ENCODE measurements at regions of chr2 and their contacts with region 1.

Region 1: GRCh38 chr2:43478411-43479086 is 117.3 kb downstream of the THADA start:
- DNase-seq: peak; percentile 43
- ATAC-seq: peak; percentile 64
- H3K4me3 ChIP-seq: no peak overlapping the region
- H3K27ac ChIP-seq: no peak overlapping the region
- H3K4me1 ChIP-seq: 0 out of 2 replicates have a peak, but pooled peaks cover 4% of the 10 kb centered on the region
- H3K27me3 ChIP-seq: no peaks in the 10 kb centered on the region
- CTCF ChIP-seq: no peak
- POLR2A ChIP-seq: no peak
- RAD21 ChIP-seq: no peak

Region 2: DNA sequence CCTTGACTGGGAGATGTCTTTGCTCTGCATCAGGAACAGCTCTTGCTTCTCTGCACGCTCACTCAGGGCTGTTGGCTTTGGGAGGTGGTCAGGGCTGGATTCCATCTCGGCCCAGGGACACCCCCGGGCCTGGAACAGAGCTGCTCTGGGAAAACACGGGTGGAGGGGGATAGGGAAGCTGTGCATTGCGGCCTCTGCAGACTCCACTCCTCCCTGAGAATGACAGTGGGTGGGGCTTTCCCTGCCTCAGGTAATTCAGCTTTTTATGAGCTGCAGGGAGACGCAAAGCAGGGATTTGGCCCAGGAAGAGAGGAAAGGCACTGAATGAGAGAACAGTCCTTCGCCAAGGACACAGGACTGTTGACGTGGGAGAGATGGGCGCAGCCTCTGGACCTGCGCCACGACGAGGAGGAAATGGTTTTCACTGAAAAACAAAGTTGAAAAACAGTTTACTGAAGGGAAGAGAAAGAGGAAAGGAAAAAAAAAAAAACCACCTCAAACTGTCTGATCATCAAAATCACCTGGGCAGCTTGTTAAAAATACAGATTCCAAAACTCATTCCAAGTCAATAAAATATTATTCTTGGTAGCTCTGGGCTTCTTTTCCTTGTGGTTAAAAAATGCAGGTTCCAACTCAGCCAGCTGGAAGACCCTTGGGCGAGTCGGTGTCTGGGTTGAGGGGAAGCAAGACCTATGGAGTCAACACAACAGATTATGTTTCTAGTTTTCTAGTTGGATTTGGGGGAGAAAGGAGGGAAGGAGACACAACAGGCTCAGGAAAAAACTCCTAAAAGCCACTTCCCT is 446.1 kb before region 1 on chr2:
- CTCF ChIA-PET with region 1: no interaction called
- POLR2A ChIA-PET with region 1: interaction called, 10 read pairs
- dilution Hi-C with region 1: no loop called
- in situ Hi-C with region 1: no loop called
- intact Hi-C with region 1: no loop called
- DNase-seq: no peak
- ATAC-seq: no peak
- H3K4me3 ChIP-seq: no peak overlapping the region
- H3K27ac ChIP-seq: no peak overlapping the region
- H3K4me1 ChIP-seq: no peaks in the 10 kb centered on the region; the same call in 1 of the 2 replicates
- H3K27me3 ChIP-seq: no peaks in the 10 kb centered on the region
- CTCF ChIP-seq: no peak
- POLR2A ChIP-seq: no peak
- RAD21 ChIP-seq: no peak

Region 3: GRCh38 chr2:43343573-43344304 is 134.8 kb before region 1 on chr2:
- CTCF ChIA-PET with region 1: no interaction called
- POLR2A ChIA-PET with region 1: no interaction called
- dilution Hi-C with region 1: no loop called
- in situ Hi-C with region 1: no loop called
- intact Hi-C with region 1: loop called (anchors 5 kb)
- DNase-seq: peak; percentile 97
- ATAC-seq: peak; percentile 69
- H3K4me3 ChIP-seq: no peak overlapping the region
- H3K27ac ChIP-seq: peak overlapping the region; percentile 92; the same call in 1 of the 2 replicates
- H3K4me1 ChIP-seq: peaks cover 39% of the 10 kb centered on the region
- H3K27me3 ChIP-seq: no peaks in the 10 kb centered on the region
- CTCF ChIP-seq: no peak
- POLR2A ChIP-seq: no peak
- RAD21 ChIP-seq: no peak